PC-9 (cell line): ENCODE measurements at regions of chr12 and their contacts with region 1.

Region 1: DNA sequence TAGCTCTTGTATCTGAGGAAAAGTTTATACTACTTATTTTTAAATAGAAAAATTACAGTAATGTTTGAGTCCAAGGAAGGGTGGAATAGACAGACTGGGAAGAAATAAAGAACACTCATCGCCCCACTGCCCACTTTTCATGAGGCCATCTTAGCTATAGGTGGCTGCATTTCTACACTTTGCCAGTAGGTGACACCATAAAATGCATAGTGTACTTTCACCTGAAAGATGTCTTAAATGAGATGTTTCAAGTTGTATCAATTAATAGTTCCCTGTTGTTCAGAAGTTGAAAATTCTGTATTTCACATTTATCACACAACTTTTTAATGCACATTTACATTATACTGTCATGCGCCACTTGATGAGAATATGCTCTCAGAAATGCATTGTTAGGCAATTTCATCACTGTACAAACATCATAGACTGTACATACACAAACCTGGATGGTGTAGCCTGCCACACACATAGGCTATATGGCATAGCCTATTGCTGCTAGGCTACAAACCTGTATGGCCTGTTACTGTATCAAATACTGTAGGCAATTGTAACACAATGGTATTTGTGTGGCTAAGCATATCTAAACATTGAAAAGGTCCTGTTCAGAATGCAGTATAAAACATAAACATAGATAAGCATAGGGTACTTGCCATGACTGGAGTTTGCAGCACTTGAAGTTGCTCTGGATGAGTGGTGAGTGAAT is 27.6 kb downstream of the PMCH start:
- DNase-seq: no peak
- H3K4me3 ChIP-seq: no peak overlapping the region
- H3K27ac ChIP-seq: no peak overlapping the region
- H3K4me1 ChIP-seq: 0 out of 2 replicates have a peak, but pooled peaks cover 3% of the 10 kb centered on the region
- H3K27me3 ChIP-seq: no peaks in the 10 kb centered on the region
- CTCF ChIP-seq: peak; percentile 74

Region 2: DNA sequence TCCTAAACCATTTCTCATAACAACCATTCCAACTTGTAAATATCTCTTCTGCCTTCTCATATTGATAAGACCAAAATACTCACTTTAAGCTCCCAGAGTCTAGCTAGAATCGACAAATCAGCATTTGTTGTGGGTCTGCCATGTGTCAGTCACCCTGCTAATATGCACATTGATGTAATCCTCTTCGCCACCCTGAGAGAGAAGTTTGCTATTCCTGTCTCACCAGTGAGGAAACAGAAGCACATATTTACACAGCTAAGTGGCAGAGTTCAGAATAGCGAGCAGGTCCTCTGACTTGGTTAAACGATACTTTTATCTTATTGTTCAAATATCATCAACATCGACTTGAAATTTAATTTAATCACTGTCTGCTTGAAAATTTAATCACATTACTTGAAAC is 1233.4 kb before region 1 on chr12:
- CTCF ChIA-PET with region 1: no interaction called
- POLR2A ChIA-PET with region 1: no interaction called
- intact Hi-C with region 1: loop called (anchors 10 kb)
- DNase-seq: no peak
- H3K4me3 ChIP-seq: no peak overlapping the region
- H3K27ac ChIP-seq: no peak overlapping the region
- H3K4me1 ChIP-seq: no peaks in the 10 kb centered on the region
- H3K27me3 ChIP-seq: no peaks in the 10 kb centered on the region
- CTCF ChIP-seq: no peak

Region 3: DNA sequence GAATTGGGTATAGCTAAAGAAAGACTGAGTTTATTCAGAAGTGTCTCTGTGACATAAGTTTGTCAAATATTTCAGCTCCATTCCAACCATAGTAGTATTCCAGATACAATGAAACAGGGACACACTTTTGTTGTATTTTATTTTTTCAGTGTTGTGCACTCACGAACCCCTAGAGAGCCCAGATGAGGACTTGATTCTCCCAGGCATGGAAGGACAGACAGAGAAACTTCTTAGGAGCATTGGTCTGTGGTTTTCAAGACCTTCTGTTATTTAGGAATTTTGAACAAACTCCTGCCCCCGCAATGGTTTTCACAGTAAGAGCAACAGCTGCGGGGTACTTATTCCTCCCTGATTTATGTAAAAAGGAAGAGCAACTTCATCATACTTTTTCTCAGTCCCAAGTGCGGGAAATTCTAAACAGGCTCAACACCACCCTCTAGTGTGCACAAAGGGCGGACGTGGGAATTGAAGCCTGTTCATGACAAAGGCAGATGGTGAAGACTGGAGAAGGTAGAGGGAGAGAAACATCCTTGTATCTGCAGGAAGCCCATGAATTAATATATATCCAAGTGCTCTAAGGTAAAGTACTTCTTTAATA is 599.3 kb after region 1 on chr12:
- CTCF ChIA-PET with region 1: no interaction called
- POLR2A ChIA-PET with region 1: no interaction called
- intact Hi-C with region 1: loop called (anchors 1 kb)
- DNase-seq: peak; percentile 47 to 48
- H3K4me3 ChIP-seq: no peak overlapping the region
- H3K27ac ChIP-seq: no peak overlapping the region
- H3K4me1 ChIP-seq: no peaks in the 10 kb centered on the region
- H3K27me3 ChIP-seq: no peaks in the 10 kb centered on the region
- CTCF ChIP-seq: peak; percentile 78